ENCODE measurements at regions of chr5 and their contacts with region 1.

Region 1: DNA sequence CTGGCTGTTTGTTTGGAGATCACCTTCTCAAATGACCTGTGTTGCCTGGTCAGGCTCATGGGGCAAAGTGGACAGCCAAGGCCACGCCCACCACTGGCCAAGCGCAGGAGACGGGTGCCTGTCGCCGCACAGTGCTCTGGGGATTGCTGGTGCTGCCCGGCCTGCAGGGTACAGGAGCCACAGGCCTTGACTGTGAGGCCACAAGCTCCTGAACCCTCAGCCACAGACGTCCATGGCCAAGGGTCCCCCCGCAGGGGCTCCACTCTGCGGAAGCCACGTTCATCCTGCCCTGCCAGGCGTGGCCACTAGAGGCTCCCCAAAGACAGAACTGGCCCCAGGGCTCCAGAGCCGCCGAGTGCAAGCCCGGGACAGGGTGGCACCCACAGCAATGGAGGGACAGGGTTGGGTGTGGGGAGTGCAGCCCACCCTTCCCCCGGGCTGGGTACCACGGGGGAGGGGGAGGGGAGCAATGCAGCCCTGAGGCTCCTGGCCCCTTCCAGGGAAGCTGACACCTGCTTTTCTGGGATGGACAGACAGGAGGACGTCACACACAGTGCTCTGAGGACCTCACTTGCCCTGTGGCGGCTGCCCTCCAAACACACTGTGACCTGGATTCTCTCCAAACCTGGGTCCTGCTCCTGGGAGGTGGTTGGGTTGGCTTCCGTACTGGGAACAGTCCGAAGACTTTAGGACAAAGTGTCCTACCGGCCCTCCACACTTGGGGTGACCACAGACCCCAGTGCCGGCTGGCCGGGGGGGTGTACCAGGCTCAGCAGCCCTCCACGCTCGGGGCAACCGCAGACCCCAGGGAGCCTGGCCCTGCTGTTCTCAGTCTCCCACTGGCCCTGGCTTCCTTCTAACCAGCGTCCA is 21.5 kb downstream of the TPPP start:
- DNase-seq: no peak
- ATAC-seq: peak; percentile 90
- H3K4me3 ChIP-seq: no peak overlapping the region
- H3K27ac ChIP-seq: no peak overlapping the region
- H3K4me1 ChIP-seq: no peaks in the 10 kb centered on the region
- H3K27me3 ChIP-seq: no peaks in the 10 kb centered on the region
- CTCF ChIP-seq: peak; percentile 83 to 91 (median 86)
- EP300 ChIP-seq: no peak
- POLR2A ChIP-seq: no peak
- RAD21 ChIP-seq: peak; percentile 90

Region 2: DNA sequence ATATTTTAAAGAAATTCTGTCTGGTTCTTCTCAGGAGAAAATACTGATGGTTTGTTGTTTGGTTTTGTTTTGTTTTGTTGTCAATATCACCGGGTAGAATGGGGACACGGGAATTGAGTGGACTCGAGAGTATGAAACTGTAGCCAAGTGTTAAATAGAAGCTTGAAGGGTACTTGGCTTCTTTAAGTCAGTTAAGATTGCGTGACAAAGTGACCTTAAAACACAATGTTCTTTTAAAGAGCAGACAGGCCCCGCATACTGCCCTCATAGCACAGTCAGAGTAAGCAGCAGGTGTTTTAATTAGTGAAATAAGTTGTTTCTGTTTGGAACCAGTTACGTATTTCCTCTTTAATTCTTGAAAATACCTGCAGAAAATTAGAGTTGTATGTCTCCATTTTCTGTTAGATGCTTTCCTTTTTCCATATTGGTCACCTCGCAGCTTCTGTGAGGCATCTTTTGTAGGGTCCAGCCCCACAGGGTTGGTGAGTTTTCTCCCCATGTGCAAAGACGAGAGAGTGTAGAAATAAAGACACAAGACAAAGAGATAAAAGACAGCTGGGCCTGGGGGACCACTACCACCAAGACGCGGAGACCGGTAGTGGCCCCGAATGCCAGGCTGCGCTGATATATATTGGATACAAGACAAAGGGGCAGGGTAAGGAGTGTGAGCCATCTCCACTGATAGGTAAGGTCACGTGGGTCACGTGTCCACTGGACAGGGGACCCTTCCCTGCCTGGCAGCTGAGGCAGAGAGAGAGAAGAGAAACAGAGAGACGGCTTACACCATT is 230.6 kb after region 1 on chr5:
- CTCF ChIA-PET with region 1: interaction called, 6 read pairs
- POLR2A ChIA-PET with region 1: no interaction called
- RAD21 ChIA-PET with region 1: interaction called, 5 read pairs
- SMC1A ChIA-PET with region 1: no interaction called
- in situ Hi-C with region 1: loop called (anchors 5 kb)
- intact Hi-C with region 1: loop called (anchors 2 kb)
- DNase-seq: no peak
- ATAC-seq: no peak
- H3K4me3 ChIP-seq: no peak overlapping the region
- H3K27ac ChIP-seq: no peak overlapping the region
- H3K4me1 ChIP-seq: no peaks in the 10 kb centered on the region
- H3K27me3 ChIP-seq: no peaks in the 10 kb centered on the region
- CTCF ChIP-seq: no peak
- EP300 ChIP-seq: no peak
- POLR2A ChIP-seq: no peak
- RAD21 ChIP-seq: no peak

Region 3: GRCh38 chr5:1090538-1090937 is 418.8 kb after region 1 on chr5:
- CTCF ChIA-PET with region 1: no interaction called
- POLR2A ChIA-PET with region 1: no interaction called
- RAD21 ChIA-PET with region 1: no interaction called
- SMC1A ChIA-PET with region 1: no interaction called
- in situ Hi-C with region 1: no loop called
- intact Hi-C with region 1: no loop called
- DNase-seq: no peak
- ATAC-seq: no peak
- H3K4me3 ChIP-seq: no peak overlapping the region
- H3K27ac ChIP-seq: no peak overlapping the region
- H3K4me1 ChIP-seq: no peaks in the 10 kb centered on the region
- H3K27me3 ChIP-seq: no peaks in the 10 kb centered on the region
- CTCF ChIP-seq: no peak
- EP300 ChIP-seq: no peak
- POLR2A ChIP-seq: no peak
- RAD21 ChIP-seq: no peak

Measured in GM12878 (cell line).